K562 (cell line): ENCODE measurements at regions of chr3 and their contacts with region 1.

Region 1: GRCh38 chr3:100254168-100254777 is 6.5 kb upstream of the TBC1D23 start:
- DNase-seq: peak; percentile 14 to 71 (median 42)
- ATAC-seq: peak; percentile 94
- H3K4me3 ChIP-seq: no peak overlapping the region
- H3K27ac ChIP-seq: no peak overlapping the region
- H3K4me1 ChIP-seq: peaks cover 0 to 6% of the 10 kb centered on the region in 2 experiments; a peak in 3 of 5 replicates
- H3K27me3 ChIP-seq: no peaks in the 10 kb centered on the region
- CTCF ChIP-seq: peak; percentile 66 to 79 (median 78)
- EP300 ChIP-seq: no peak
- POLR2A ChIP-seq: no peak
- RAD21 ChIP-seq: peak; percentile 89 to 93

Region 2: GRCh38 chr3:99817437-99818240 is 436.6 kb before region 1 on chr3 and contains the start of gene CMSS1:
- CTCF ChIA-PET with region 1: no interaction called
- POLR2A ChIA-PET with region 1: no interaction called
- in situ Hi-C with region 1: no loop called
- intact Hi-C with region 1: no loop called
- DNase-seq: peak; percentile 84 to 90 (median 86)
- ATAC-seq: peak; percentile 94
- H3K4me3 ChIP-seq: peak within 1 kb of the TSS; percentile 81
- H3K27ac ChIP-seq: peak within 1 kb of the TSS; percentile 96
- H3K4me1 ChIP-seq: peaks cover 5 to 7% of the 10 kb centered on the region in 2 experiments; a peak in 4 of 5 replicates
- H3K27me3 ChIP-seq: no peaks in the 10 kb centered on the region
- CTCF ChIP-seq: 0 out of 6 replicates have a peak, but pooled peaks of 2 of the 3 experiments have one; percentile 9 to 15
- EP300 ChIP-seq: peak; percentile 98
- POLR2A ChIP-seq: peak; percentile 87
- RAD21 ChIP-seq: no peak
- polyA plus RNA-seq, gene CMSS1: 73.0 to 109 TPM

Region 3: DNA sequence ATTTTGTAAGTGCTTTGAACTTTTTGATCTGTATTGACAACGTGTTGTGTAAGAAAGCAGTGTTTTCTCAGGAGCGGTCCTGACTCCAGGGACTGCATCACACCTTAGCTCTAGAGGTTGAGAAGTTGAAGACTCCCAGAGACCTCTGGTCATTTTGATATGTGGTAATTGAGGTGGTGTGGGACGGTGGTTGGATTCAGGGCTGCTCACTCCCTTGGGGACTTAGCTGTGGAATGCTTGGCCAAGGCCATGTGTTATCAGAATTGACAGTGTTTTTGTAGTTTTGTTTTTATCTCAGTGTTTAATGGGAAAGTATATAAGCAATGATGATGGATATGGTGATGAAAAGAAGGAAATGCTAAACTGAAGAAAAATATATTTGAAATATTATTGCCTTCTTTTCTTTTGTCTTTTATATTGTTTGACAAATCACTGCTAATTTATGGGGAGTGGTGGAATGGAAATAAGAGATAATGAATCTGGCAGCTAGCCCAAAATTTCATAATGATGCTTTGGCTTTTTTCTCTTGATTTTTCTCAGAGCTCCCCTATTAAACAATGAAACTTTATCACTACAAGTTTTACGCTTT is 420.6 kb before region 1 on chr3:
- CTCF ChIA-PET with region 1: interaction called, 12 read pairs
- POLR2A ChIA-PET with region 1: no interaction called
- in situ Hi-C with region 1: loop called (anchors 5 kb)
- intact Hi-C with region 1: no loop called
- DNase-seq: no peak
- ATAC-seq: no peak
- H3K4me3 ChIP-seq: no peak overlapping the region
- H3K27ac ChIP-seq: no peak overlapping the region
- H3K4me1 ChIP-seq: no peaks in the 10 kb centered on the region; a peak in 1 of 5 replicates
- H3K27me3 ChIP-seq: no peaks in the 10 kb centered on the region
- CTCF ChIP-seq: no peak
- EP300 ChIP-seq: no peak
- POLR2A ChIP-seq: no peak
- RAD21 ChIP-seq: no peak

Region 4: GRCh38 chr3:100073899-100074307 is 180.4 kb before region 1 on chr3:
- CTCF ChIA-PET with region 1: no interaction called
- POLR2A ChIA-PET with region 1: interaction called, 3 read pairs
- in situ Hi-C with region 1: loop called (anchors 10 kb)
- intact Hi-C with region 1: loop called (anchors 1 kb)
- DNase-seq: no peak
- ATAC-seq: peak; percentile 30; the same call in 1 of the 3 replicates
- H3K4me3 ChIP-seq: no peak overlapping the region
- H3K27ac ChIP-seq: peak overlapping the region; percentile 26; the same call in 1 of the 3 replicates
- H3K4me1 ChIP-seq: peaks cover 2 to 29% of the 10 kb centered on the region in 2 experiments; a peak in 3 of 5 replicates
- H3K27me3 ChIP-seq: no peaks in the 10 kb centered on the region
- CTCF ChIP-seq: no peak
- EP300 ChIP-seq: no peak
- POLR2A ChIP-seq: no peak
- RAD21 ChIP-seq: no peak